ENCODE measurements at regions of chr14 and their contacts with region 1.

Region 1: GRCh38 chr14:72439707-72440106 is 454.2 kb downstream of the DPF3 start:
- DNase-seq: peak; percentile 89
- ATAC-seq: peak; percentile 68
- H3K4me3 Mint-ChIP-seq: peak overlapping the region; percentile 68
- H3K27ac Mint-ChIP-seq: peak overlapping the region; percentile 86
- H3K4me1 Mint-ChIP-seq: peaks cover 95% of the 10 kb centered on the region
- H3K27me3 Mint-ChIP-seq: no peaks in the 10 kb centered on the region

Region 2: DNA sequence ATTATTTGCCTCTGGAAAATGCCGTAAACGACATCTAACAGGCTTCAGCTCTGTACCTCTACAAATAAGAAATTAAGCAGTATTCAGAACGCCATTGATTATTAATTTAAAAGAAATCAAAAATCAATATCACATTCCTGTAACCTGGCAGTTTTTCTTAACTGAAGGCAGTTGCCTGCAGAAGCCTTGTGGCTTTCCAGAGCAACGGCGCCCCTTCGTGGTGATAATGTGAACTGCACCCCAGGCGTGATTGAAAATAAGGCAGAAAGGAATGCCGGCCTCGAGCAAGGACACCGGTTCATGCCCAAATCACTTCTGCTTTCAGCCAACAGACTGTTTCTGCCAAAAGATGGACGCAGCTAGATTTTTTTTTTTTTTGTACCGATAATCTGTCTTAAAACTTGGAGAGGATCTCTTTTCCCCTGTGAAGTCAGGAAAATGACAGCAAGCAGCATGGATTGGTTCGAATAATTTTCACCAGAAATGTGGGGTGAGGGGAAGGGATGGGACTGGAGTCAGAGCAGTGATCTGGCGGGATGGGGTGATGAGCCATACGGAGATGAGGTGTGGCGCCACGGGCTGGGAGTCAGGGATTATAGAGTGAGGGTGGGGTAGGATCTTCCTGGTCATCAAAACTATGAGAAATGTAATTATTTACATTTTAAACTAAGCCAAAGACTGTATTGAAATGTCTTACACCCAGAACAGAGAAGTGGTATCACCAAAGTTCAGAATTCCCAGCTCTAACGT is 18.8 kb before region 1 on chr14:
- CTCF ChIA-PET with region 1: interaction called, 26 read pairs
- DNase-seq: peak; percentile 88
- ATAC-seq: peak; percentile 47
- H3K4me3 Mint-ChIP-seq: no peak overlapping the region
- H3K27ac Mint-ChIP-seq: peak overlapping the region; percentile 55
- H3K4me1 Mint-ChIP-seq: peaks cover 7% of the 10 kb centered on the region
- H3K27me3 Mint-ChIP-seq: peaks cover 36% of the 10 kb centered on the region

Region 3: GRCh38 chr14:72451054-72451972 is 11.6 kb after region 1 on chr14:
- CTCF ChIA-PET with region 1: interaction called, 16 read pairs
- DNase-seq: peak; percentile 86
- ATAC-seq: peak; percentile 79
- H3K4me3 Mint-ChIP-seq: peak overlapping the region; percentile 27
- H3K27ac Mint-ChIP-seq: peak overlapping the region; percentile 95
- H3K4me1 Mint-ChIP-seq: peaks cover 71% of the 10 kb centered on the region
- H3K27me3 Mint-ChIP-seq: no peaks in the 10 kb centered on the region

Region 4: GRCh38 chr14:72463291-72463866 is 23.7 kb after region 1 on chr14:
- CTCF ChIA-PET with region 1: no interaction called
- DNase-seq: no peak
- ATAC-seq: no peak
- H3K4me3 Mint-ChIP-seq: no peak overlapping the region
- H3K27ac Mint-ChIP-seq: no peak overlapping the region
- H3K4me1 Mint-ChIP-seq: no peaks in the 10 kb centered on the region
- H3K27me3 Mint-ChIP-seq: peaks cover 3% of the 10 kb centered on the region

Region 5: GRCh38 chr14:72476657-72477499 is 37.2 kb after region 1 on chr14:
- CTCF ChIA-PET with region 1: interaction called, 29 read pairs
- DNase-seq: peak; percentile 96
- ATAC-seq: peak; percentile 88
- H3K4me3 Mint-ChIP-seq: peak overlapping the region; percentile 51
- H3K27ac Mint-ChIP-seq: peak overlapping the region; percentile 94
- H3K4me1 Mint-ChIP-seq: peaks cover 78% of the 10 kb centered on the region
- H3K27me3 Mint-ChIP-seq: no peaks in the 10 kb centered on the region

Measured in activated CD8-positive, alpha-beta memory T cell treated with anti-CD3 and anti-CD28 coated beads, Interleukin-2, amount 10 ng/mL, durations not matched to agents 7 days and 5 days (primary cell).